Calu3 (cell line): ENCODE measurements at regions of chr12 and their contacts with region 1.

Region 1: GRCh38 chr12:39294715-39295114 is 148.2 kb downstream of the KIF21A start:
- DNase-seq: no peak
- H3K4me3 Mint-ChIP-seq: no peak overlapping the region
- H3K27ac Mint-ChIP-seq: no peak overlapping the region
- H3K4me1 Mint-ChIP-seq: no peaks in the 10 kb centered on the region
- H3K27me3 Mint-ChIP-seq: no peaks in the 10 kb centered on the region
- CTCF ChIP-seq: no peak

Region 2: GRCh38 chr12:39237004-39237403 is 57.7 kb before region 1 on chr12:
- CTCF ChIA-PET with region 1: no interaction called
- intact Hi-C with region 1: loop called (anchors 10 kb)
- DNase-seq: no peak
- H3K4me3 Mint-ChIP-seq: no peak overlapping the region
- H3K27ac Mint-ChIP-seq: no peak overlapping the region
- H3K4me1 Mint-ChIP-seq: peaks cover 16% of the 10 kb centered on the region
- H3K27me3 Mint-ChIP-seq: no peaks in the 10 kb centered on the region
- CTCF ChIP-seq: no peak